Astrocyte of the cerebellum (primary cell): ENCODE measurements at regions of chr3 and their contacts with region 1.

Region 1: GRCh38 chr3:111151438-111151837 is 79.8 kb downstream of the NECTIN3 start:
- DNase-seq: peak; percentile 40
- H3K4me3 ChIP-seq: no peak overlapping the region
- CTCF ChIP-seq: no peak

Region 2: DNA sequence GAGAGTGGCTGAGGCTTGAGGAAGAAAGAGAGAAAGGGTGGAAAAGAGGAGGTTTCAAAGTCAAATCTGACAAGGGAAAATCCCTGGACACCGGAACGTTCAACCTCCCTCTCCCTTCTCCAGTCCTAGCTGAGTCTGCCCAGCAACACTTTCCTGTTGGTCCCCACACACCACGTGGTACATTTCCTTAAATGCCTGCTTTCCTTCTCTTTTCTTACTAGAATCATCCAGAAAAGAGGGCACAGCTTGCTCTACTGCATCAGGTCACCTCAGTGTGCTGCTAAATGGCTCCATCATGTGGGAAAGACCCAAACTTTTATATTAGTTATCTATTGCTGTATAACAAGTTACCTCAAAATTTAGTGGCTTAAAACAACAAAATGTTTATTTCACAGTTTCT is 101.3 kb after region 1 on chr3:
- in situ Hi-C with region 1: loop called (anchors 5 kb)
- DNase-seq: peak; percentile 5
- H3K4me3 ChIP-seq: no peak overlapping the region
- CTCF ChIP-seq: no peak